ENCODE measurements at regions of chr12 and their contacts with region 1.

Region 1: GRCh38 chr12:114868995-114869834 is 185.2 kb upstream of the TBX3 start:
- DNase-seq: no peak
- ATAC-seq: no peak
- H3K4me3 ChIP-seq: no peak overlapping the region
- H3K4me1 ChIP-seq: no peaks in the 10 kb centered on the region
- CTCF ChIP-seq: no peak

Region 2: DNA sequence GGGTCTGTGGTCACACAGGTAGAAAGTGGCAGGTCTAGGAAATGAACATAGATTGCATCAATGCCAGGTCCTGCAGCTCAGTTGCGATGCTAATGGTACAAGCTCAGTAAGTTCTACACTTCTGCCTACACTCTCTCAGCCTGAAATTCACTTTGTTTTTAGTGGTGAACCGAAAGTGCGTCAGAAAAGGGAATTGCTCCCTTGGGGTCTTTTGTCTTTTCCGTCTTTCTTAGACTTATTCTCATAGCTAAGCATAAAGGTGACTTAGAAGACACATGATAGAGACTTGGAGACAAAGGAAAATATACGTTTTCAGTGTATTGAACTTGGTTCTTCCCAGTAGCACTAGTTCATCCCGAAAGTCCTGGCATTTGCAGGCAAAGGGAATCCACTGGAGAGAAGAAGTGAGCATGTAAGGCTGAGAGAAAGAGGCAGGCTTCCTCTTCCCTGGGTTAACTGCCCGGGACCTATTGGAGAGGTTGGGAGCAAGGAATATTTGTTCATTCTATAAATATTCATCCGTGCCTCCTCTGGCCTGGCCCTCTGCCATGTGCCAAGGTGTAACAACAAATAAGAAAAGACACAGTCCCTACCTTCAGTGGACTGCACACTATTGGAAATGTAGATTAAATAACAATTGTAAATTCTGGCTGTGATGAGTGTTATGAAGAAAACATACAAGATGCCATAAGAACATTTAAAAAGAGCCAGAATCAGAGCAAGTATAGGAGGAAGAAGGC is 622.5 kb after region 1 on chr12:
- intact Hi-C with region 1: loop called in 1 of 2 experiments (anchors 5 kb)
- DNase-seq: no peak
- ATAC-seq: no peak
- H3K4me3 ChIP-seq: no peak overlapping the region
- H3K4me1 ChIP-seq: no peaks in the 10 kb centered on the region
- CTCF ChIP-seq: no peak

Measured in mucosa of descending colon (tissue), 3 donors.